ENCODE measurements at regions of chr3 and their contacts with region 1.

Region 1: DNA sequence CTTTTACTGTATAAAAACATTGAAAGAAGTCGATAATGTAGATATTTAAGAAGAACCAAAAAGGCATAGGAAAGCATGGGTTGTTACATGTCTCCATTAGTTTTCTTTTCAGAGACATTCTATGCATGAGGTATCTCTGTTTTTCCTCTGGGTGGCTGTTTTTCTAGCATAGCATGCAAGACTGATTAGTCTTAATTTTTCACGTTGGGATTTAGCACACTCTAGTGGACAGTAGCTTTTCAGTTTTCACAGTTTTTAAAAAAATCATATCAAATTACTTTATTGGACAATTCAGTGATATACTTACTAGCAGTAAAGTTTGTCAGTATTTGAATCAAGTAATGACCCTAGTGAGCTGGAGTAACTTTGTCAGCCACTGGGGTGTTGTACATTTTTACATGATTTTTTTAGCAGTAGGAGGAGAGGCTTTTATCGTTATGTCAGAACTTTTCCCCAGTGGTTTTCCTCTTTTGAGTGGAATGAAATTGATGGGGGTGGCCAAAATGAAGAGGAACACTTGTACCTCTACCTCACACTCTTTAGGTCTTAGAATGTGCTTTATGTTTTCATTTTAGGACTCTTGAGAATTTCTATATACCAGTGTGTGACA is 57.2 kb downstream of the SEC22A start:
- DNase-seq: no peak

Region 2: DNA sequence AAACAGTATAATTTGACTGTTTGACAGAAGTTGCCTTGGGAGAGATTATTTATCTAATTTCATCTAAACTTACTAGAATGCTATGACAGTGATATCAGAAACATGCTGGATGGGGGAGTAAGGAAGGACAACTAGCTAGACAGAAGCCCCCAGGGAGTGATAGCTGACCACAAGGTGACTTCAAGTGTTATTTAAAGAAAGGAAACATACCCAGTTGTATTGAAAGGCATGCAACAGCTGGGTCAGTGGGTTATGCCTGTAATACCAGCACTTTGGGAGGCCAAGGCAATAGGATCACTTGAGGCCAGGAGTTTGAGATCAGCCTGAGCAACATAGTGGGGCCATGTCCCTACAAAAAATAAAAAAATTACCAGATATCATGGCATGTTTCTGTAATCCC is 394.4 kb before region 1 on chr3:
- intact Hi-C with region 1: loop called (anchors 10 kb)
- DNase-seq: no peak